Heart left ventricle (tissue), 16 donors: ENCODE measurements at regions of chr6 and their contacts with region 1.

Region 1: GRCh38 chr6:133730881-133731280 is 158.0 kb upstream of the TCF21 start:
- DNase-seq: no peak
- ATAC-seq: no peak
- H3K4me3 ChIP-seq: no peak overlapping the region
- H3K27ac ChIP-seq: no peak overlapping the region
- H3K4me1 ChIP-seq: peaks cover 0 to 4% (median 0%) of the 10 kb centered on the region in 12 donors
- H3K27me3 ChIP-seq: no peaks in the 10 kb centered on the region
- CTCF ChIP-seq: no peak
- POLR2A ChIP-seq: no peak

Region 2: DNA sequence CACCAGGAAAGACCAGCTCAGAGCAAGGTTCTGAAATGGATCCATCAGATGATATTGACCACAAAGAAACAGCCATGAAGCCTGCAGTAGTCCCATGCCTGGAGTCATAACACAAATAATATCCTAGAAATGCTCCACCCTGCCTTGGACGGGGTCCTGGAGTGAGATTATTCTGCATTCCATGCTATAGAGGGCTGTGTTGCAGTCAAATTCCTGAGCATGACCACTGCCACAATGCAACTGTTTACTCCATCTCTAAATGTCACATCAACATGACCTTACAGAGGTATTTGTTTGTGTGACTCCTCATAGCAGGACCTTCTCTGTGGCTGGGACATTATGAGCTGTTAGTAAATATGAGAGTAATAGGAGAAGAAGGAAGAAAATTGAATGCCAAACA is 99.5 kb before region 1 on chr6:
- intact Hi-C with region 1: loop called in 1 of 10 experiments (anchors 10 kb)
- DNase-seq: no peak
- ATAC-seq: no peak
- H3K4me3 ChIP-seq: no peak overlapping the region
- H3K27ac ChIP-seq: no peak overlapping the region
- H3K4me1 ChIP-seq: peaks cover 0 to 6% (median 0%) of the 10 kb centered on the region in 12 donors
- H3K27me3 ChIP-seq: no peaks in the 10 kb centered on the region
- CTCF ChIP-seq: no peak
- POLR2A ChIP-seq: no peak